ENCODE measurements at regions of chr5 and their contacts with region 1.

Region 1: DNA sequence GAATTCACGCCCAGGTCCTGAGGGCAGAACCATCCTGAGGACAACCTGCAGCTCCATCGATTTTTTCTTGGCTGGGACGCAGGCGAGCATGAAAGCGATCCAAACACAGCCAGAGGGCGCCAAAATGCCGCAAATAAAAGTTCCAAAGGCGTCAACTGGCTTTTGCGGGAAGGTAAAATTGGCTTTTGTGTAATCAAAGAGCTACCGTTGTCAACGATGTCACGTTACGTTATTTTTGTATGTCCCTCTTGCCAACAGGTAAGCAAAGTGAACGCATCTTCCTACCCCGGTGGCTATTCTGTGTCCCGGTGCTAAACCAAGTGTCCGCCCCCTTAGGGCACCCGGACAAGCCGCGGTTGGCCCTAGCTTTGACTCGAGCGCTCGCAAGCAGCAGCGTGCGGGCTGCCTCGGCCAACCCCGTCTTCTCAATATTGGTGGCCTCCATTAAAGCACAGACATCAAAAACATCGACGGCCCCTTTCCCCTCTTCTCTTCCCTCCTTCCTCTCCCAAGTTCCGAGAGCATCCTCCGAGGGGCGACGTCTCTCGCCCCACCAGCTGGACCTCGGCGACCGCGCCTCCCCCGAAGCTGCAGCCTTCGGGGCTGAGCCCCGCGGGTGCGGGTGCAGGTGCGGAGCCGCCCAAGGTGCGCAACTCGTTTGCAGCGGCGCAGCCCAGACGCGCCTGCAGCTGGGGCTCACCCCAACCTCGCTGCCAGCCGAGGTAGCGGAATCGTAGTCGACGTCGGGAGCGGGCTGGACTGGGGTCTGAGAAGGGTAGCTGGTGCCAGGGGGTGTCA is 1.1 kb upstream of the BASP1 start:
- DNase-seq: peak; percentile 62
- ATAC-seq: peak; percentile 49
- H3K4me3 ChIP-seq: peak overlapping the region; percentile 52
- H3K27ac ChIP-seq: no peak overlapping the region
- H3K4me1 ChIP-seq: peaks cover 7% of the 10 kb centered on the region; the same call in 1 of the 2 replicates
- H3K27me3 ChIP-seq: no peaks in the 10 kb centered on the region
- CTCF ChIP-seq: peak; percentile 73 to 91 (median 80)
- EP300 ChIP-seq: no peak
- POLR2A ChIP-seq: no peak
- RAD21 ChIP-seq: peak; percentile 98

Region 2: GRCh38 chr5:16881251-16881650 is 335.1 kb before region 1 on chr5:
- CTCF ChIA-PET with region 1: no interaction called
- POLR2A ChIA-PET with region 1: no interaction called
- RAD21 ChIA-PET with region 1: no interaction called
- SMC1A ChIA-PET with region 1: no interaction called
- in situ Hi-C with region 1: no loop called
- intact Hi-C with region 1: no loop called
- DNase-seq: no peak
- ATAC-seq: no peak
- H3K4me3 ChIP-seq: no peak overlapping the region
- H3K27ac ChIP-seq: no peak overlapping the region
- H3K4me1 ChIP-seq: no peaks in the 10 kb centered on the region
- H3K27me3 ChIP-seq: no peaks in the 10 kb centered on the region
- CTCF ChIP-seq: no peak
- EP300 ChIP-seq: no peak
- POLR2A ChIP-seq: no peak
- RAD21 ChIP-seq: no peak

Region 3: DNA sequence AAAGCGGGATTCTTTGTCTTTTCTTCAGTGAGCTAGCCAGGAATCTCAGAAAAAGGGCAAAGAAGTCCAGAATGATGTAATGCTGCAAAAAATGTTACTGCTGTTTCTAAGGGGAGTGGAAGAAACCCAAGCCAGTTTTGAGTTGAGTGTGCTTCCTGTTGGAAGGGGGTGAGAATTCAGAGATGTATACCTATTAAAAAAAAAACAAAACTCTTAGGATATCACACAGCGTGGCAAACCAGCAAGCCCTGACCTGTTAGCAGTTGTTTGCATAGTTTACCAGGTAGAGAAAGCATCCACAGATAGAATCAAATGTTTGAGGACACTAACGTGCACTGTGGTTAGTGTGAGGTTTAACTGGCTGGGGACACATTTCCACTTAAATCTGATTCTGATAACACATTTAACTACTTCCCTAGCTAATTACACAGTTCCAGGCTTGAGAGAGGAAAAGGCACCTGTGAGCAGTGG is 12.5 kb after region 1 on chr5:
- CTCF ChIA-PET with region 1: interaction called, 38 read pairs
- POLR2A ChIA-PET with region 1: interaction called, 5 read pairs
- RAD21 ChIA-PET with region 1: interaction called, 29 read pairs
- SMC1A ChIA-PET with region 1: interaction called, 16 read pairs
- in situ Hi-C with region 1: no loop called
- intact Hi-C with region 1: no loop called
- DNase-seq: peak; percentile 66
- ATAC-seq: peak; percentile 64
- H3K4me3 ChIP-seq: peak overlapping the region; percentile 13; the same call in 1 of the 2 replicates
- H3K27ac ChIP-seq: peak overlapping the region; percentile 88
- H3K4me1 ChIP-seq: peaks cover 34% of the 10 kb centered on the region
- H3K27me3 ChIP-seq: no peaks in the 10 kb centered on the region
- CTCF ChIP-seq: no peak
- EP300 ChIP-seq: peak; percentile 24 to 35; a peak in 1 of 4 replicates
- POLR2A ChIP-seq: no peak
- RAD21 ChIP-seq: 0 out of 2 replicates have a peak, but pooled peaks have one; percentile 1

Region 4: GRCh38 chr5:17282283-17283120 is 66.1 kb after region 1 on chr5:
- CTCF ChIA-PET with region 1: interaction called, 7 read pairs
- POLR2A ChIA-PET with region 1: interaction called, 3 read pairs
- RAD21 ChIA-PET with region 1: interaction called, 53 read pairs
- SMC1A ChIA-PET with region 1: interaction called, 27 read pairs
- in situ Hi-C with region 1: loop called (anchors 5 kb)
- intact Hi-C with region 1: loop called (anchors 2 kb)
- DNase-seq: peak; percentile 91
- ATAC-seq: peak; percentile 95
- H3K4me3 ChIP-seq: peak overlapping the region; percentile 55
- H3K27ac ChIP-seq: peak overlapping the region; percentile 71
- H3K4me1 ChIP-seq: peaks cover 18% of the 10 kb centered on the region
- H3K27me3 ChIP-seq: no peaks in the 10 kb centered on the region
- CTCF ChIP-seq: no peak; a peak in 1 of 6 replicates
- EP300 ChIP-seq: peak; percentile 45 to 61; a peak in 3 of 4 replicates
- POLR2A ChIP-seq: no peak
- RAD21 ChIP-seq: no peak; the same call in 1 of the 2 replicates

Region 5: GRCh38 chr5:17470064-17470463 is 253.7 kb after region 1 on chr5:
- CTCF ChIA-PET with region 1: interaction called, 13 read pairs
- POLR2A ChIA-PET with region 1: no interaction called
- RAD21 ChIA-PET with region 1: no interaction called
- SMC1A ChIA-PET with region 1: interaction called, 8 read pairs
- in situ Hi-C with region 1: no loop called
- intact Hi-C with region 1: no loop called
- DNase-seq: no peak
- ATAC-seq: no peak
- H3K4me3 ChIP-seq: no peak overlapping the region
- H3K27ac ChIP-seq: no peak overlapping the region
- H3K4me1 ChIP-seq: no peaks in the 10 kb centered on the region
- H3K27me3 ChIP-seq: no peaks in the 10 kb centered on the region
- CTCF ChIP-seq: no peak
- EP300 ChIP-seq: no peak
- POLR2A ChIP-seq: no peak
- RAD21 ChIP-seq: no peak

Region 6: GRCh38 chr5:18113721-18114120 is 897.3 kb after region 1 on chr5:
- CTCF ChIA-PET with region 1: interaction called, 14 read pairs
- POLR2A ChIA-PET with region 1: no interaction called
- RAD21 ChIA-PET with region 1: interaction called, 3 read pairs
- SMC1A ChIA-PET with region 1: interaction called, 12 read pairs
- in situ Hi-C with region 1: loop called (anchors 10 kb)
- intact Hi-C with region 1: loop called (anchors 2 kb)
- DNase-seq: no peak
- ATAC-seq: no peak
- H3K4me3 ChIP-seq: no peak overlapping the region
- H3K27ac ChIP-seq: no peak overlapping the region
- H3K4me1 ChIP-seq: no peaks in the 10 kb centered on the region
- H3K27me3 ChIP-seq: no peaks in the 10 kb centered on the region
- CTCF ChIP-seq: peak in 1 of 3 experiments; percentile 14; a peak in 1 of 6 replicates
- EP300 ChIP-seq: no peak
- POLR2A ChIP-seq: no peak
- RAD21 ChIP-seq: peak; percentile 38

Region 7: GRCh38 chr5:18305297-18305924 is 1089.0 kb after region 1 on chr5:
- CTCF ChIA-PET with region 1: interaction called, 132 read pairs
- POLR2A ChIA-PET with region 1: interaction called, 4 read pairs
- RAD21 ChIA-PET with region 1: interaction called, 123 read pairs
- SMC1A ChIA-PET with region 1: interaction called, 107 read pairs
- in situ Hi-C with region 1: loop called (anchors 5 kb)
- intact Hi-C with region 1: loop called (anchors 1 kb)
- DNase-seq: no peak
- ATAC-seq: peak; percentile 76
- H3K4me3 ChIP-seq: no peak overlapping the region
- H3K27ac ChIP-seq: no peak overlapping the region
- H3K4me1 ChIP-seq: no peaks in the 10 kb centered on the region
- H3K27me3 ChIP-seq: no peaks in the 10 kb centered on the region
- CTCF ChIP-seq: peak; percentile 66 to 91 (median 79); a peak in 5 of 6 replicates
- EP300 ChIP-seq: no peak
- POLR2A ChIP-seq: no peak
- RAD21 ChIP-seq: peak; percentile 95